ENCODE measurements at regions of chr7 and their contacts with region 1.

Region 1: GRCh38 chr7:99200691-99201440 is 7.0 kb downstream of the KPNA7 start:
- DNase-seq: peak; percentile 77 to 98
- H3K4me3 ChIP-seq: no peak overlapping the region
- H3K27ac ChIP-seq: peak overlapping the region; percentile 99
- H3K4me1 ChIP-seq: peaks cover 33% of the 10 kb centered on the region
- H3K27me3 ChIP-seq: no peaks in the 10 kb centered on the region
- CTCF ChIP-seq: no peak

Region 2: GRCh38 chr7:99167072-99167471 is 33.8 kb before region 1 on chr7:
- CTCF ChIA-PET with region 1: interaction called, 3 read pairs
- POLR2A ChIA-PET with region 1: interaction called, 15 read pairs
- intact Hi-C with region 1: loop called (anchors 1 kb)
- DNase-seq: no peak
- H3K4me3 ChIP-seq: no peak overlapping the region
- H3K27ac ChIP-seq: no peak overlapping the region
- H3K4me1 ChIP-seq: peaks cover 13% of the 10 kb centered on the region
- H3K27me3 ChIP-seq: no peaks in the 10 kb centered on the region
- CTCF ChIP-seq: no peak

Region 3: GRCh38 chr7:99190359-99191032 is 10.4 kb before region 1 on chr7:
- CTCF ChIA-PET with region 1: no interaction called
- POLR2A ChIA-PET with region 1: interaction called, 9 read pairs
- intact Hi-C with region 1: loop called (anchors 1 kb)
- DNase-seq: no peak
- H3K4me3 ChIP-seq: no peak overlapping the region
- H3K27ac ChIP-seq: no peak overlapping the region
- H3K4me1 ChIP-seq: peaks cover 17% of the 10 kb centered on the region
- H3K27me3 ChIP-seq: no peaks in the 10 kb centered on the region
- CTCF ChIP-seq: no peak

Measured in PC-9 (cell line).